Sciatic nerve (tissue), 2 donors: ENCODE measurements at regions of chr10 and their contacts with region 1.

Region 1: DNA sequence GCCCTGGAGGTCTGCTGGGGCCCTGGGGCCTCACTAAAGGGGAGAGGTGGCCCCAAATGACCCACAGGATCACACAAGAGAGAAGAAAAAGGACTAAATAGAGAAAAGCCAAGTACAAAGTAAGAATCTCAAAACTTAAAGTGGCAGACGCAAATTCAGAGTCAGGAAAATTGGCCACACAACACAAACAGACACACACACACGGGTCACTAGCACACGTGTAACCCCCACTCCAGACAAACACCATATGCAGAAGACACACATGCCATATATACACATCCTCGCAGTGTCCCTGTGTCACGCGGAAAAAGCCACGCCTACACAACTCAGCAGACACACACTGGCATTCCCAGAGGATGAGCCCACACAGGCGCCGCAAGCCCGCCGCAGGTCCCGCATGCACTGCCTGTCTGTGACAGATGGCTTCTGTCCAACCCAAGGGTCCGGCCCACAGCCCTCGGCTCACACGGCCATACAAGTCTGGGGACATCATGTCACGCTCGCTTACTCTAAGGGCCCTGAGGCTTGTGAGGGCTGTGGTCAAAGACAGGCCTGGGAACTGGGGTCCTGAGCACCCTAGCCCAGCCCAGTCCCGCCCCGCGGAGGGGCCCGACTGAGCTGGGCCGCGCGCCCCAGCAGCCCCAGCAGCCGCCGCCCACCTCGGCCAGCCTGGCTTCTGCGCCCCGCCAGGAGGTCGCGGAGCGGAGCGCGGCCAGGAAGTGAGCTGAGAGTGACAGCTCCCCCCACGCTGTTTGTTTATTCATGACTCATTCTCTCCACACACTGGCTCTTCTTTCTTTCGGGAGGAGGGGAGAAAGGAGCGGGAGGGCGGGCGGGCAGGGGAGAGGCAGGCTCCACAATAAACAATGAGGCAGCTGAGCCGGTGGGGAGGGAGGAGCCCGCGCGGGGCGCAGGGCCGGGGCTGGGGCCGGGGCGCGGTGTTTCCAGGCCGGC is 95.5 kb upstream of the ZMIZ1 start:
- DNase-seq: peak; percentile 88
- ATAC-seq: peak; percentile 53

Region 2: GRCh38 chr10:77441353-77442166 is 1531.7 kb before region 1 on chr10:
- intact Hi-C with region 1: no loop called
- DNase-seq: no peak
- ATAC-seq: no peak

Region 3: GRCh38 chr10:78852466-78853240 is 120.6 kb before region 1 on chr10:
- intact Hi-C with region 1: no loop called
- DNase-seq: no peak
- ATAC-seq: no peak

Region 4: DNA sequence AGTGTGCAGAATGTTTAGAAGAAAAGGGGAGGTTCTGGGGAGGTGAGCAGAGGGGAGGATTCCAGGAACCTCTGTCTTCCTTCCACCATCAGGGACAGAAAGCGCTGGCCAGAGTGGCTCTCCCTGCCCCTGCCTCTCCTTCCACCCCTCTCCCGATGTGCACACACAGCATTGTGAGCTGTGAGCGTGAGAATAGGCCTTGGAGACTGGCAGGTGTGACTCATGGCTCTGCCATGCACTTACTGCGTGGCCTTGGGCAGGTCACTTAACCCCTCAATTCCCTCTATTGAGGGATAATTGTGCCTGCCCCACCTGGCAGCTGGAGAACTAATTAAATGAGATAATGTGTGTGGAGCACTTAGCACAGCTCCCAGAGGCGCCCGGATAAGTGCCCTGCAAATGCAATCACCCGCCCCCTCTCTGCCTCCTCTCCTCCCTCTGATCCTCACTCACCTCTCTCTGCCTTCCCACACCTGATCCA is 211.0 kb after region 1 on chr10:
- intact Hi-C with region 1: loop called (anchors 10 kb)
- DNase-seq: no peak
- ATAC-seq: no peak